HepG2 (cell line): ENCODE measurements at regions of chr16 and their contacts with region 1.

Region 1: DNA sequence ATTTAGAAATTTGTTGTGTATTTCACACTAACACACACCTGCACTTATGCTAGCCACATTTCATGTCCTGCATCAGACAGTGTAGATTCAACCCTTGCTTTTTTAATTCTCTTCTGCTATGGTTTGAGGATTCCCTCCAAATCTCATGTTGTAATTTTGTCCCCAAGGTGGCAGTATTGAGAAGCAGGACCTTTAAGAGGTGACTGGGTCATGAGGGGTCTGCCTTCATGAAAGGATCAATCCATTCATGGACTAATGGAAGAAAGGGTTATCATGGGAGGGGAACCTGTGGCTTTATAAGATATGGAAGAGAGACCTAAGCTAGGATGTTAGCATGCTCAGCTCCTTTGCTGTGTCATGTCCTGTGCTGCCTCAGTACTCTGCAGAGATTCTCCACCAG is 1032.2 kb downstream of the CDH11 start:
- DNase-seq: peak; percentile 50
- ATAC-seq: peak; percentile 86
- H3K4me3 ChIP-seq: no peak overlapping the region
- H3K27ac ChIP-seq: no peak overlapping the region
- H3K4me1 ChIP-seq: no peaks in the 10 kb centered on the region
- H3K27me3 ChIP-seq: no peaks in the 10 kb centered on the region
- CTCF ChIP-seq: peak; percentile 77
- EP300 ChIP-seq: no peak
- POLR2A ChIP-seq: no peak
- RAD21 ChIP-seq: peak; percentile 70

Region 2: DNA sequence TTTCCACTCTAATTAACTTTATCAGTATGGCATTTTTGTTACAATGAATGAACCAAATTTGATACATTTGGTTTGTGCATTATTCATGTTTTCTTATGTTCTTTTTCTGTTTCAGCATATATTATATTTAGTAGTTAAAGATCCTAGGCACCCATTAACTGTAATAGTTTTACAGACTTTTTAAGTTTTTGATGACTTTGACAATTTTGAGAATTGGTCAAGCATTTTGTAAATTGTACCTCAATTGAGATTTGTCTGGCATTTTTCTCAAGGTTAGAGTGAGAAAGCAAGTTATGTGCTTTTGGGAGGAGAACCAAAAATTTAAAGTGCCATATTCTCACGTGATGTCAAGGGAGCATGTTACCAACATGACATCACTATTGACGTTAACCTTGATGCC is 13.0 kb after region 1 on chr16:
- CTCF ChIA-PET with region 1: no interaction called
- POLR2A ChIA-PET with region 1: no interaction called
- in situ Hi-C with region 1: no loop called
- intact Hi-C with region 1: no loop called
- DNase-seq: no peak
- ATAC-seq: no peak
- H3K4me3 ChIP-seq: no peak overlapping the region
- H3K27ac ChIP-seq: no peak overlapping the region
- H3K4me1 ChIP-seq: no peaks in the 10 kb centered on the region
- H3K27me3 ChIP-seq: no peaks in the 10 kb centered on the region
- CTCF ChIP-seq: no peak
- EP300 ChIP-seq: no peak
- POLR2A ChIP-seq: no peak
- RAD21 ChIP-seq: no peak

Region 3: DNA sequence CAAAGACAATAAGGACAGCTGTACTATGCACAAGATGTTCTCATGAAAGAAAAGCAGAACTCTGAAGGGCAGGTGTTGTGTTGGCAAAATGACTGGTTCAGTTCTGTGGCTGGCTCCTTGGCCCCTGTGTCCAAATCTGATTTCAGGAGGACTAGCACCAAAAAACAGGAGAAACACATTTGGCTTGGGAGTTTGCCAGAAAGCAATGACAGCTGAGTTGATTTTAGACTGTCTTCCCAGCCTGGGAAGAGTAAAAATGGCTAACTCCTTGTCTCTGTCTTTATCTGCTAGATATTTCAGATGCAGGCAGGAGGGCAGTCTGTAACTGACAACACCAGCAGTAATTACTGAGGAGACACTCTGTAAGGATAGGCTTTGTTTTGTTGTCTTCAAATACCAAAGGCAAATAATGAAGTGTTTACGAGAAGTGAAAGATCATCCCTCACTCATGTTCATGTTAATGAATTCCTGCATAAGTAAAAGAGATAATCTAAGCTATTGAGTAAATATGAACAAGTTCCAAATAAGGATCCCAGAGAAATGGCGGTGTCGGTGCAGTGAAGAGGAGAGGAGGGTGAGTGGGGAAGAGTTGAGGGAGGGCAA is 43.2 kb after region 1 on chr16:
- CTCF ChIA-PET with region 1: no interaction called
- POLR2A ChIA-PET with region 1: no interaction called
- in situ Hi-C with region 1: no loop called
- intact Hi-C with region 1: no loop called
- DNase-seq: no peak
- ATAC-seq: peak; percentile 31; the same call in 2 of the 3 replicates
- H3K4me3 ChIP-seq: no peak overlapping the region
- H3K27ac ChIP-seq: no peak overlapping the region
- H3K4me1 ChIP-seq: peaks cover 8% of the 10 kb centered on the region; the same call in 1 of the 2 replicates
- H3K27me3 ChIP-seq: no peaks in the 10 kb centered on the region
- CTCF ChIP-seq: no peak
- EP300 ChIP-seq: no peak
- POLR2A ChIP-seq: no peak
- RAD21 ChIP-seq: no peak

Region 4: DNA sequence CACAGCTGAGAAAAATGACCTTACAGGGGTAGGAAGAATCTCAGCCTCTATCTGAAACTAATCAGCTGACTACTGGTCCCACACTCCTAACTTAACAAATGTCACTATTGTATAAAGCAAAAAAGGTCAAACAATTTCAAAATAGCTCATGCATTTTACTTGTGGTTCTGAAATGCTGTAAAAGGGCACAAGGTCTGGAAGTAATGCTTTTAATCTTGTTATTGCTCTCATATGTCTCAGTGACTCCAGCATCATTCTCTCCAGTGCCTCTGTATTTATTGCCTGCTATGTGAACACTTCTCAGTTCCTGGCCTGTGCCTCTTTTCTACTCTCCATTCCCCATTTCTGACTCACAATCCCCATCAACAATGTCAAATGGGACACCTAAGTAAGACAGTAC is 94.5 kb after region 1 on chr16:
- CTCF ChIA-PET with region 1: no interaction called
- POLR2A ChIA-PET with region 1: no interaction called
- in situ Hi-C with region 1: no loop called
- intact Hi-C with region 1: loop called (anchors 5 kb)
- DNase-seq: no peak
- ATAC-seq: no peak
- H3K4me3 ChIP-seq: no peak overlapping the region
- H3K27ac ChIP-seq: no peak overlapping the region
- H3K4me1 ChIP-seq: peaks cover 23% of the 10 kb centered on the region
- H3K27me3 ChIP-seq: no peaks in the 10 kb centered on the region
- CTCF ChIP-seq: no peak
- EP300 ChIP-seq: no peak
- POLR2A ChIP-seq: no peak
- RAD21 ChIP-seq: no peak

Region 5: GRCh38 chr16:64406770-64407181 is 317.1 kb after region 1 on chr16:
- CTCF ChIA-PET with region 1: no interaction called
- POLR2A ChIA-PET with region 1: no interaction called
- in situ Hi-C with region 1: no loop called
- intact Hi-C with region 1: no loop called
- DNase-seq: no peak
- ATAC-seq: no peak
- H3K4me3 ChIP-seq: no peak overlapping the region
- H3K27ac ChIP-seq: no peak overlapping the region
- H3K4me1 ChIP-seq: no peaks in the 10 kb centered on the region
- H3K27me3 ChIP-seq: no peaks in the 10 kb centered on the region
- CTCF ChIP-seq: no peak
- EP300 ChIP-seq: no peak
- POLR2A ChIP-seq: no peak
- RAD21 ChIP-seq: no peak

Region 6: DNA sequence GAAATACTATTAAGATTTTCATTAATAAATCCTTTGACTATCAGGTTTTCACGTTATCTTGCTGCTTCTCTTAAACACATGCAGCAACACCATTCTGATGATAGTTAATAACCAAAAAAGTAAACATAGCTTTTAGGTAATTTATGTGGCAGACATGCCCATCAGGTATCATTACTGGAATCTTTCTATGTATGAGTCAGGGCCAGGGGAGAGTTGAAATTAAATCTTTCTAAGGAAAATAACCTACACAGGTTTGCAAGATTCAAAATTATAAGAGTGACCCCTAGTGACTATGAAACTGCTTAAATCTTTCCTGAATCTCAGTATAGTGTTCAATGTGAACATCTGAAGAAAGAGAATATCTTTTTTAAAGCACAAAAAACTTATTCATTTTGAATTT is 365.6 kb after region 1 on chr16:
- CTCF ChIA-PET with region 1: interaction called, 3 read pairs
- POLR2A ChIA-PET with region 1: no interaction called
- in situ Hi-C with region 1: no loop called
- intact Hi-C with region 1: loop called (anchors 5 kb)
- DNase-seq: no peak
- ATAC-seq: no peak
- H3K4me3 ChIP-seq: no peak overlapping the region
- H3K27ac ChIP-seq: no peak overlapping the region
- H3K4me1 ChIP-seq: no peaks in the 10 kb centered on the region
- H3K27me3 ChIP-seq: no peaks in the 10 kb centered on the region
- CTCF ChIP-seq: 0 out of 2 replicates have a peak, but pooled peaks have one; percentile 9
- EP300 ChIP-seq: no peak
- POLR2A ChIP-seq: no peak
- RAD21 ChIP-seq: no peak

Region 7: GRCh38 chr16:64478252-64478906 is 388.7 kb after region 1 on chr16:
- CTCF ChIA-PET with region 1: no interaction called
- POLR2A ChIA-PET with region 1: no interaction called
- in situ Hi-C with region 1: no loop called
- intact Hi-C with region 1: loop called (anchors 2 kb)
- DNase-seq: peak; percentile 64
- ATAC-seq: peak; percentile 94
- H3K4me3 ChIP-seq: no peak overlapping the region
- H3K27ac ChIP-seq: no peak overlapping the region
- H3K4me1 ChIP-seq: peaks cover 16% of the 10 kb centered on the region
- H3K27me3 ChIP-seq: no peaks in the 10 kb centered on the region
- CTCF ChIP-seq: no peak
- EP300 ChIP-seq: no peak
- POLR2A ChIP-seq: no peak
- RAD21 ChIP-seq: no peak